Activated B cell treated with CpG ODN at 0.5 μM for 24 hours (primary cell): ENCODE measurements at regions of chr22 and their contacts with region 1.

Region 1: GRCh38 chr22:29394931-29395581 is 6.7 kb upstream of the AP1B1 start:
- DNase-seq: peak; percentile 54
- ATAC-seq: peak; percentile 87
- H3K4me3 Mint-ChIP-seq: no peak overlapping the region
- H3K27ac Mint-ChIP-seq: no peak overlapping the region
- H3K4me1 Mint-ChIP-seq: peaks cover 17% of the 10 kb centered on the region
- H3K27me3 Mint-ChIP-seq: peaks cover 2% of the 10 kb centered on the region
- CTCF ChIP-seq: peak; percentile 78

Region 2: GRCh38 chr22:29470159-29470855 is 75.3 kb after region 1 on chr22:
- CTCF ChIA-PET with region 1: no interaction called
- POLR2A ChIA-PET with region 1: no interaction called
- intact Hi-C with region 1: loop called (anchors 10 kb)
- DNase-seq: peak; percentile 54
- ATAC-seq: peak; percentile 69
- H3K4me3 Mint-ChIP-seq: peak overlapping the region; percentile 56
- H3K27ac Mint-ChIP-seq: no peak overlapping the region
- H3K4me1 Mint-ChIP-seq: peaks cover 14% of the 10 kb centered on the region
- H3K27me3 Mint-ChIP-seq: peaks cover 20% of the 10 kb centered on the region
- CTCF ChIP-seq: peak; percentile 36

Region 3: GRCh38 chr22:29593923-29594322 is 198.9 kb after region 1 on chr22:
- CTCF ChIA-PET with region 1: interaction called, 3 read pairs
- POLR2A ChIA-PET with region 1: no interaction called
- intact Hi-C with region 1: loop called (anchors 5 kb)
- DNase-seq: no peak
- ATAC-seq: no peak
- H3K4me3 Mint-ChIP-seq: no peak overlapping the region
- H3K27ac Mint-ChIP-seq: no peak overlapping the region
- H3K4me1 Mint-ChIP-seq: peaks cover 6% of the 10 kb centered on the region
- H3K27me3 Mint-ChIP-seq: no peaks in the 10 kb centered on the region
- CTCF ChIP-seq: no peak